Left cardiac atrium (tissue), 4 donors: ENCODE measurements at regions of chr4 and their contacts with region 1.

Region 1: GRCh38 chr4:7719354-7720174 is 220.1 kb downstream of the AFAP1 start:
- DNase-seq: peak; percentile 63
- ATAC-seq: peak; percentile 70 to 73

Region 2: GRCh38 chr4:7328898-7329638 is 390.5 kb before region 1 on chr4:
- intact Hi-C with region 1: loop called in 1 of 2 experiments (anchors 10 kb)
- DNase-seq: peak; percentile 57
- ATAC-seq: peak; percentile 60 to 69

Region 3: DNA sequence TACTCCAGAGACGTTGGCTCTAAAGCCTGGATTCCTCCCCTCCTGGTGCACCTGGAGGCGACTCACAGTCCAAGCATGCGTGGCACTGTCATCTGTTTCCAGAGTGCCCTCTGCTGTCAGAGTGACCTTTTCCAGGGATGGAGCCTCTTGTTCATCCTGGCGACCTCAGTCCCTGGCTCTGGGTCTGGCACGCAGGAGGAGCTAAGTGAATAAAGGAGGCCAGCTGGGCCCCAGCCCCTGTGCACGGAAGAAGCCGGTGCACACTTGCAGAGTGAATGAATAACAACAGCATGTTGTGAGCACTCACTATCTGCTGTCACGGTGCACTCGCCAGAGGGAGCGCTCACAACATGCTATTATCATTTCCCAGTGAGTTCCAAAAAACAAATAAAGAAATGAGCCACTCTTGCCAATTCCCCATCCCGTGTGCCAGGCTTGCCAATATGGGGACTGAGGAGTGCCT is 257.0 kb before region 1 on chr4:
- intact Hi-C with region 1: loop called (anchors 2 to 5 kb)
- DNase-seq: no peak
- ATAC-seq: peak in 1 of 2 donors; percentile 40